ENCODE measurements at regions of chr2 and their contacts with region 1.

Region 1: GRCh38 chr2:188997263-188997662 is 23.1 kb downstream of the COL3A1 start:
- DNase-seq: no peak
- ATAC-seq: peak in 1 of 4 donors; percentile 49
- H3K4me3 ChIP-seq: no peak overlapping the region
- H3K27ac ChIP-seq: peak overlapping the region in 1 of 12 donors; percentile 53
- H3K4me1 ChIP-seq: peaks cover 0 to 21% (median 0%) of the 10 kb centered on the region in 12 donors
- H3K27me3 ChIP-seq: no peaks in the 10 kb centered on the region
- CTCF ChIP-seq: no peak
- POLR2A ChIP-seq: no peak

Region 2: GRCh38 chr2:189049709-189050164 is 52.5 kb after region 1 on chr2:
- intact Hi-C with region 1: loop called in 1 of 10 experiments (anchors 10 kb)
- DNase-seq: no peak
- ATAC-seq: no peak
- H3K4me3 ChIP-seq: no peak overlapping the region
- H3K27ac ChIP-seq: no peak overlapping the region
- H3K4me1 ChIP-seq: no peaks in the 10 kb centered on the region
- H3K27me3 ChIP-seq: no peaks in the 10 kb centered on the region
- CTCF ChIP-seq: no peak
- POLR2A ChIP-seq: no peak

Measured in heart left ventricle (tissue), 16 donors.